Aorta (tissue), 5 donors: ENCODE measurements at regions of chr20 and their contacts with region 1.

Region 1: GRCh38 chr20:31605031-31605901 is at the start of gene ID1:
- DNase-seq: peak; percentile 97 to 98
- ATAC-seq: peak; percentile 94
- H3K4me3 ChIP-seq: peak within 1 kb of the TSS; percentile 56 to 67
- H3K27ac ChIP-seq: peak within 1 kb of the TSS; percentile 34 to 91
- H3K4me1 ChIP-seq: no peaks in the 10 kb centered on the region
- H3K27me3 ChIP-seq: no peaks in the 10 kb centered on the region
- total RNA-seq, gene ID1: 170 to 396 TPM

Region 2: DNA sequence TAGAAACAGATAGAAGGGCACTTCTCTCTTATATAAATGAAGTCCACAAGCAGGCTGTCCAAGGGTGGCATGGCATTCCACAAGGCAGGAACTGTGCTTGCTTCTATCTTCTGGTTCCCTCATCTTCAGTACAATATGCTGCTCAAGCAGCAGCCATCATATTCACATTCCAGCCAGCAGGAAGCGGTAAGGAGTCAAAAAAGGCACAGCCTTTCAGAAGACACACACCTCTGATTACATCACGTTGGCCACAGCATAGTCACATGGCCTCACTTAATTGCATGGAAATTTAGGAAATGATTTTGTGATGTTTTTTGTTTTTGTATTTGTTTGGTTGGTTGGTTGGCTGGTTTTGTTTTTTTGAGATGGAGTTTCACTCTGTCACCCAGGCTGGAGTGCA is 111.1 kb before region 1 on chr20:
- intact Hi-C with region 1: no loop called
- DNase-seq: no peak
- ATAC-seq: no peak
- H3K4me3 ChIP-seq: no peak overlapping the region
- H3K27ac ChIP-seq: no peak overlapping the region
- H3K4me1 ChIP-seq: peaks cover 0 to 4% of the 10 kb centered on the region in 2 donors
- H3K27me3 ChIP-seq: no peaks in the 10 kb centered on the region

Region 3: DNA sequence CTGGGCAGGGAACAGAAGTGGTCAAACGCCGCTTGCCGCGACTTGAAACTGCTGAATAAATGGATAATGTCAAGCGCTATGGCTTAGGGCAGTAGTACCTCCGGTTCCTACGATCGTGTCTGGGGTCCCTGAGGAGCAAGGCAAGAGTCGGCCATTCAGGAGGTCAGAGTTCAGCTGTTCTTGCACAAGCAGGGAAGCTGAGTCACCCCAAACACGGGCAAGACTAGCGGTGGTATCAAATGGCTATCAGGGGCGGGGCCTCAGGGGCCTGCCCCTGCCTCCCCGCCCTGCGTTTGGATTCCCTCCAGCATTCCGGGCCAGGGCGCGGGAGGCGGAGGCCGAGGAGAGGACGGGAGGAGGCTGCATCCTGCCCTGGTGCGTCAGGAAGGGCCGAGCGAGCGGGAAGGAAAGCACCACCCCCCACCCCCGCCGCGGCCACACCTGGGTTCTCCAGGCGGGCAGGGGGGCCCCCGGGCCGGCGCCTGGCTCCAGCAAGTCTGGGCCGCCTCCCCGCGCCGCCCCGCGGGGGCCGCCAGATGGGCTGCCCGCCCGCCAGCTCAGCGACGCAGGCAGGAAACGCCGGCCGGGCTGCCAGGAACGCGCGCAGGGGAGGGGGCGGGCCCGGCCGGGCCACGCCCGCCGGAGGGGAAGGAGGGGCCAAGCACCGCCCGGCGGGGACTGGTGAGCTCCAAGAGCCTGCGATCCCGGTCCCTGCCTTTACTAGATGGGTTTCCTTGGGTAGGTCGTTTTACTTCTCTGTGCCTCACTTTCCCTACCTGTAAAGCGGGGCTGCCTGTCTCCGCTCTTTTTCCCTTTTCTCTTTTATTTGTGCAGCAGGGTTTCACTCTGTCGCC is 32.3 kb before region 1 on chr20:
- intact Hi-C with region 1: loop called in 1 of 2 experiments (anchors 2 kb)
- DNase-seq: peak; percentile 97 to 98
- ATAC-seq: peak; percentile 95
- H3K4me3 ChIP-seq: peak overlapping the region in 1 of 2 donors; percentile 22
- H3K27ac ChIP-seq: peak overlapping the region; percentile 82 to 97
- H3K4me1 ChIP-seq: no peaks in the 10 kb centered on the region
- H3K27me3 ChIP-seq: no peaks in the 10 kb centered on the region